Psoas muscle (tissue), 8 donors: ENCODE measurements at regions of chr17 and their contacts with region 1.

Region 1: DNA sequence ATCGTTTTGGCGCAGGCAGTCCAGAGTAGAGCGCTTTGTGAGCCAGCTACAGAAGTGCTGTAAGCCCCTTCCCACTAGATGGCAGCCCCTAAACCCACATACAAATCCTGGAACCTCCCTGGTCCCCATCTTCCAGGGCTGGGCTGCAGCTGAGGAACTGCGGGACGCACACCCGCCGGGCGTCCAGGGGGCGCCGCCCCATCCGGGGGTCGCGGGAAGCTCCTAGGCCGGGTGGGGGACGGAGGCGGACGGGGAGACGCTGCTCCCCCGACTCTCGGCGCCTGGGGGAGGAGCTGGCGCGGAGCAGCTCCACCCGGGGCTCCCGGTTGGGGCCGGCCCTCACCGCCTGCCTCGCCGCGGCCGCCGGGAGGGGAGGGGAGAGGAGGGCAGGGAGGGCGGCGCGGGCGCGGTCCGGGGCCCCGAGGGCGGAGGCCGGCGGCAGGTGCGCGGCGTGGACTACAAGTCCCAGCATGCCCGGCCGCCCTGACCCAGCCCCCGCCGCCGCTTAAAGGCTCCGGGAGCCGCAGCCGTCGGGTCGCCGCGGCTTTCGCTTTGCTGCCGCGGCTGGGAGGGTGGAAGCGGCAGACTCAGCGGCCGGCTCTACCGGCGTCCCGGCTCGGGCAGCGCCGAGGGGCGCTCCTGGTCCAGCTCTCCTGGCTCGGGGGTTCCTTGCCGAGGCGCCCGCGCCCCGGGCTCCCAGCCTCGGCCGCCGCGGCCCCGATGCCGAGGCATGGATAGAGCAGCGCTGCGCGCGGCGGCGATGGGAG is at the start of gene KSR1:
- DNase-seq: peak; percentile 85 to 87
- ATAC-seq: peak; percentile 94 to 96 (median 96)
- H3K4me3 ChIP-seq: peak within 1 kb of the TSS; percentile 87
- H3K27ac ChIP-seq: peak within 1 kb of the TSS; percentile 74
- H3K4me1 ChIP-seq: peaks cover 7% of the 10 kb centered on the region
- H3K27me3 ChIP-seq: no peaks in the 10 kb centered on the region
- CTCF ChIP-seq: peak; percentile 14
- total RNA-seq, gene KSR1: 46.5 to 93.0 (median 70.7) TPM

Region 2: GRCh38 chr17:27245230-27245696 is 210.8 kb before region 1 on chr17:
- intact Hi-C with region 1: loop called in 1 of 2 experiments (anchors 10 kb)
- DNase-seq: peak; percentile 87 to 92
- ATAC-seq: peak; percentile 92 to 97 (median 96)
- H3K4me3 ChIP-seq: peak overlapping the region; percentile 43
- H3K27ac ChIP-seq: peak overlapping the region; percentile 89
- H3K4me1 ChIP-seq: peaks cover 34% of the 10 kb centered on the region
- H3K27me3 ChIP-seq: no peaks in the 10 kb centered on the region
- CTCF ChIP-seq: peak; percentile 66

Region 3: DNA sequence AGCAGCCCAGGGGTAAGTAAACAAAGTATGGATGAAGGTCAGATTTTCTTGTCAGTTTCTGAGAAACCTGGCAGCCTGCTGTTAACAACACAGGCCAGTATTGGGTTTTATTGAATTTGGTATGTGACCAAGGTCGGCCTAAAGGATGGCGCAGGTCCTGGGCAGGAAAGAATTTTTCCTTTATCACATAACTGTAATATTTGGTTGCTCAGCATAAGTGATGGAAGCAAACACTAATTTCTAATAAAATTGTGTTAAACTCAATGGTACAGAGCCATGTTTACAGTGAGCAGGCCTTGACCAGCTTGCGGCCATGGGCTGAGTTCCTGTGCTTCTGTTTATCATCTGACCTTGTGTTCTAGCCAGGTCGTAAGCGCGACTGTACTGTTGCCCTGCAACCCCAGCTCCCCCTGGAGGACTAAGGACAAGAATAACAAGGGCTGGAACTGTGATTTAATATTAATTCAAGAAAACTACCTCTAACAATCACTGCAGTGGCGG is 890.7 kb after region 1 on chr17:
- intact Hi-C with region 1: loop called in 1 of 2 experiments (anchors 10 kb)
- DNase-seq: no peak
- ATAC-seq: no peak
- H3K4me3 ChIP-seq: no peak overlapping the region
- H3K27ac ChIP-seq: no peak overlapping the region
- H3K4me1 ChIP-seq: no peaks in the 10 kb centered on the region
- H3K27me3 ChIP-seq: no peaks in the 10 kb centered on the region
- CTCF ChIP-seq: no peak